H1 (cell line): ENCODE measurements at regions of chr22 and their contacts with region 1.

Region 1: GRCh38 chr22:22380098-22381030 is 128.2 kb downstream of the ZNF280B start:
- DNase-seq: peak in 1 of 2 experiments; percentile 82
- H3K4me3 ChIP-seq: no peak overlapping the region
- H3K27ac ChIP-seq: no peak overlapping the region
- H3K4me1 ChIP-seq: no peaks in the 10 kb centered on the region
- H3K27me3 ChIP-seq: peaks cover 72 to 98% (median 94%) of the 10 kb centered on the region in 4 experiments
- CTCF ChIP-seq: peak; percentile 40 to 50 (median 47)
- EP300 ChIP-seq: no peak
- POLR2A ChIP-seq: no peak
- RAD21 ChIP-seq: peak; percentile 44 to 45

Region 2: GRCh38 chr22:22357024-22357883 is 23.1 kb before region 1 on chr22:
- CTCF ChIA-PET with region 1: interaction called, 19 read pairs
- POLR2A ChIA-PET with region 1: no interaction called
- DNase-seq: peak; percentile 41 to 94
- H3K4me3 ChIP-seq: peak overlapping the region in 1 of 4 experiments; percentile 5; a peak in 1 of 8 replicates
- H3K27ac ChIP-seq: no peak overlapping the region
- H3K4me1 ChIP-seq: peaks cover 0 to 3% (median 0%) of the 10 kb centered on the region in 4 experiments; a peak in 2 of 7 replicates
- H3K27me3 ChIP-seq: peaks cover 62 to 98% (median 88%) of the 10 kb centered on the region in 4 experiments
- CTCF ChIP-seq: peak; percentile 76 to 87 (median 76)
- EP300 ChIP-seq: no peak
- POLR2A ChIP-seq: no peak
- RAD21 ChIP-seq: peak; percentile 68 to 76

Region 3: DNA sequence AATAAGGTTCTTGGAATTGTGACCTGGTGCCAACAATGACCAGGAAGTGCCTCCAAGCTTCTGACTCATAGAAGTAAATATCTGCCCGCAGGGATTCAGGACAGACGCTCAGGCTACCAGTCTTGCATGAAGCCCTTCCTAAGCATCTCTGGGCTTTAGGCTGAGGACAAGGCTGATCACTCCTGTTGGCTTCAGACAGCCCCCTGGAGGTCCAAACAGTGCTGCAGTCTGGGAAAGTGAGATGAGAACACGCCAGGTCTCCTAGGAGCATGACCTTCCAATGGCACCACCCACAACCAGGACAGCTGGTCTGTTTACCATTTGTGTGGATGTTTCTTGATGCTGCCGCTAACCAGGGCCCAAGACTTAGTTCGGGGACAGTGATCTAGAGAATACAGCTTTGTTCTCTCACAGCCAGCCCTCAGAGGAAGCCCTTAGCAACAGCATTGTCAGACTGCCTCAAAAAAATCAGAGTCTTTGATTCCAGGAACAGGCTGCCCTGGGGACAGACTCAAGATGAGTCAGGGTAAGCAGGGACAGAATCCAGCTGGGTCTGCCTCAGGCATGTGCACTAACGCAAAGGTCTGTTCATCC is 17.0 kb after region 1 on chr22:
- CTCF ChIA-PET with region 1: interaction called, 28 read pairs
- POLR2A ChIA-PET with region 1: no interaction called
- DNase-seq: no peak
- H3K4me3 ChIP-seq: no peak overlapping the region
- H3K27ac ChIP-seq: no peak overlapping the region
- H3K4me1 ChIP-seq: no peaks in the 10 kb centered on the region
- H3K27me3 ChIP-seq: peaks cover 73 to 100% (median 94%) of the 10 kb centered on the region in 4 experiments
- CTCF ChIP-seq: peak in 1 of 3 experiments; percentile 17; a peak in 1 of 4 replicates
- EP300 ChIP-seq: no peak
- POLR2A ChIP-seq: no peak
- RAD21 ChIP-seq: no peak

Region 4: GRCh38 chr22:22408731-22409696 is 28.6 kb after region 1 on chr22:
- CTCF ChIA-PET with region 1: interaction called, 15 read pairs
- POLR2A ChIA-PET with region 1: no interaction called
- DNase-seq: peak in 1 of 2 experiments; percentile 69
- H3K4me3 ChIP-seq: no peak overlapping the region
- H3K27ac ChIP-seq: no peak overlapping the region
- H3K4me1 ChIP-seq: no peaks in the 10 kb centered on the region
- H3K27me3 ChIP-seq: peaks cover 68 to 98% (median 94%) of the 10 kb centered on the region in 4 experiments
- CTCF ChIP-seq: peak; percentile 67 to 81 (median 68)
- EP300 ChIP-seq: no peak
- POLR2A ChIP-seq: no peak
- RAD21 ChIP-seq: peak; percentile 68 to 74

Region 5: DNA sequence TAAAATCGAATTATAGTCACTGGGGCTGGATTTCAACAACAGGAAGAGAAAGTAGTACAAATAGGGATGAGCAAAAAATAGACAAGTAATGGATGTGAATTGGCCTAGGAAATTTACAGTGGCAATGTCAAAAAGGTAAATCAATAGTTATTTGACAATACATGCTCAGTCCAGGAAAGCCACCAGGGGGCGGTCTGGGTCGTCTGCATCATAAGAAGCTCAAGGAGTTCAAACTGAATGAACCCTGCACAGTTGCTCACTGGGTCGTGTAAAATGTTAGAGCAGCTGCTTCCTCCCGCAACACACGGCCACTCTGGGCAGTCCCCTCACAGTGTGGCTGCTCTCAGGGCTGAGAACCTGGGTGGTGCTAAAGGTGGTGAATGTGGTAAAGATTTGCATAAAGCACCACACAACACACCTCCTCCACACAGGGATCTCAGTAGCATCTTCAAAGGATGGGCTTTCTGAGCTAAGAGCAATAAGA is 42.3 kb after region 1 on chr22:
- CTCF ChIA-PET with region 1: interaction called, 10 read pairs
- POLR2A ChIA-PET with region 1: no interaction called
- DNase-seq: peak; percentile 21 to 85
- H3K4me3 ChIP-seq: no peak overlapping the region
- H3K27ac ChIP-seq: no peak overlapping the region
- H3K4me1 ChIP-seq: no peaks in the 10 kb centered on the region; a peak in 1 of 7 replicates
- H3K27me3 ChIP-seq: peaks cover 63 to 93% (median 88%) of the 10 kb centered on the region in 4 experiments
- CTCF ChIP-seq: peak; percentile 52 to 75 (median 72)
- EP300 ChIP-seq: no peak
- POLR2A ChIP-seq: no peak
- RAD21 ChIP-seq: peak; percentile 39 to 49; a peak in 3 of 4 replicates

Region 6: DNA sequence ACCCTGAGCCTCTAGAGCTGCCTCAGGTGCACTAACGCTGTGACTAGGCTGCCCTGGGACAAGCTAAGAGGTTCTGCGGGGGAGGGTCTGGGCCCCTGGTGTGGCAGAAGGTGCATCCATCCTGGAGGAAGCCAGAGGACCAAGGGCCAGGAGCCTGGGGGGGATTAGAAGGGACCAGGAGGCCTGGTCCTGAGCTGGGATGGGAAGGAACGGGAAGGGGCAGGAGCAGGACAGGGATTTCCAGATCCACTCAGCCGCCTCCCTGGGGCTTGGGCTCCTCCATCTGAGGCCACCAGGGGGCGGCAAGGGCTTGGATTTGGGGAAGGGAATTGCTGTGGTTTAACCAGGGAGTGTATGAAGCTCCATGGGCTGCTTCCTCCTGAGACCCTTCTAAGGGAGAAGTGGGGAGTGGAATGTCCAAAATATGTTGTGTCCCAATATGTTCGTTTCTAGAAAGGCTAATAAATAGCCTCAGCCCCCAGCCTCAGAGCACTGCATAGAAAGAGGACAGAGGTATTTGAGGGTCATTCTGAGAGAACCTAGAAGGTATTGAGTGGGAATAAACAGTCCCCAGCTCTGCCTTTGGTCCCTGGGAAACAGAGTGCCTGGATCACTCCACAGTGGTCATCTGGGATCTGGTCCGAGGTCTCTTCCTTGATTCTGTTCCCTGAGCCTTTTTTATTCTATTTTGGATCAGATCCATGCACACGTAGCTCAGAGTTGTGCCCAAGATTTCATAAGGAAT is 196.1 kb after region 1 on chr22:
- CTCF ChIA-PET with region 1: no interaction called
- POLR2A ChIA-PET with region 1: no interaction called
- DNase-seq: peak in 1 of 2 experiments; percentile 86
- H3K4me3 ChIP-seq: no peak overlapping the region
- H3K27ac ChIP-seq: no peak overlapping the region
- H3K4me1 ChIP-seq: no peaks in the 10 kb centered on the region
- H3K27me3 ChIP-seq: peaks cover 23 to 49% (median 40%) of the 10 kb centered on the region in 4 experiments
- CTCF ChIP-seq: peak; percentile 71 to 82 (median 73)
- EP300 ChIP-seq: no peak
- POLR2A ChIP-seq: no peak
- RAD21 ChIP-seq: peak; percentile 53 to 65